ENCODE measurements at regions of chr7 and their contacts with region 1.

Region 1: GRCh38 chr7:38107486-38107893 is 70.6 kb upstream of the STARD3NL start:
- DNase-seq: peak; percentile 39 to 77 (median 50)
- H3K4me3 ChIP-seq: no peak overlapping the region
- H3K4me3 Mint-ChIP-seq: no peak overlapping the region
- H3K27ac ChIP-seq: no peak overlapping the region
- H3K27ac Mint-ChIP-seq: no peak overlapping the region
- H3K4me1 ChIP-seq: no peaks in the 10 kb centered on the region
- H3K4me1 Mint-ChIP-seq: peaks cover 0 to 5% (median 4%) of the 10 kb centered on the region in 3 donors
- H3K27me3 ChIP-seq: peaks cover 4% of the 10 kb centered on the region
- H3K27me3 Mint-ChIP-seq: peaks cover 9 to 37% of the 10 kb centered on the region in 2 donors

Region 2: DNA sequence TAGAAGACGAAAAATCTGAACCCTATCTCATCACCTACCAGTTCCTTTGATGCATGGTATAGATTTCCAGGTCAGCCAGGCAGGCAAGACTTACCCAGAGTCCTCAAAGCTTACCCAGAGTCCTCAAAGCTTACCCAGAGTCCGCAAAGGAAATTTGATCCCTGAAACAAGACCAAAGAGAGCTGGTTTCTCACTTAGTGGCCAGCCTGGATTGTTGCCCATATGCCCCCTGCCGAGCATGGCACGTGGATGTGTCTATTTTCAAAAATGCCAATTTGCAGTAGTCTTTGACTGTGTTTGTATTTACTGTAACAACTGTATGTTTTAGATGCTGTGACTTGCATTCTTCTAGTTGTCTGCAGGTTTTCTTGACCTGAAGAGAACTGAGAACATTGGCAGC is 49.7 kb before region 1 on chr7:
- CTCF ChIA-PET with region 1: no interaction called
- POLR2A ChIA-PET with region 1: no interaction called
- DNase-seq: no peak
- H3K4me3 ChIP-seq: no peak overlapping the region
- H3K4me3 Mint-ChIP-seq: no peak overlapping the region
- H3K27ac ChIP-seq: no peak overlapping the region
- H3K27ac Mint-ChIP-seq: no peak overlapping the region
- H3K4me1 ChIP-seq: no peaks in the 10 kb centered on the region
- H3K4me1 Mint-ChIP-seq: no peaks in the 10 kb centered on the region
- H3K27me3 ChIP-seq: no peaks in the 10 kb centered on the region
- H3K27me3 Mint-ChIP-seq: peaks cover 2 to 14% of the 10 kb centered on the region in 2 donors

Region 3: GRCh38 chr7:38142736-38143135 is 35.2 kb after region 1 on chr7:
- CTCF ChIA-PET with region 1: no interaction called
- POLR2A ChIA-PET with region 1: no interaction called
- DNase-seq: no peak
- H3K4me3 ChIP-seq: no peak overlapping the region
- H3K4me3 Mint-ChIP-seq: no peak overlapping the region
- H3K27ac ChIP-seq: no peak overlapping the region
- H3K27ac Mint-ChIP-seq: no peak overlapping the region
- H3K4me1 ChIP-seq: no peaks in the 10 kb centered on the region
- H3K4me1 Mint-ChIP-seq: no peaks in the 10 kb centered on the region
- H3K27me3 ChIP-seq: peaks cover 3% of the 10 kb centered on the region
- H3K27me3 Mint-ChIP-seq: peaks cover 6% of the 10 kb centered on the region in 2 donors

Region 4: DNA sequence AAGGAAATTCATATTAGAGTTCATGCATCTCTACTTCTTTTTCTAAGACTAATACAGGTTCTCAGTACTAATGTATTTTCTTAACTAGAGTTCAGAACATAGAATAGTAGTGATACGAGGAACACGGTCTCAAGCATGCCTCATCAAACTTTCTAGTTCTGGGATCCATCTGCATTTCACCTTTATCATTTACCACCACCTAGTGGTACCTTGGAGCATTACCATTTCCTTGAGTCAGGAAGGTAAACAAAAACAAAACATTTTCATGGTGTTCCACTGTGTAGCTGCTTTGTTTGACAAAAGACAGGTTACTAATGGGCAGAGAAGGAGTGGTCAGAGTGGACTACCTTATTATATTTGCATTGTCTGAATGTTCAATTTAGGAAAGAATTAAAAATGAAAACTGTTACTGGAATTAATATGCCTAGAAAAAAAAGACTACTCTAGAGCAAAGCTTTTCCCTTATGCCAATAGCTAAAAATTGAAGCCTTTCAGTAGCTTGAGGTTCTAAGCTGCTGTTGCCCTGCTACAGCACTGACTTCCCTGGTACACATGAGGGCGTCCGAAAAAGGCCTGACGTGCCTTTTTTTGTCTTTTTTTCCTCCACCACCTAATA is 115.1 kb after region 1 on chr7:
- CTCF ChIA-PET with region 1: interaction called, 50 read pairs
- POLR2A ChIA-PET with region 1: no interaction called
- DNase-seq: peak in 2 of 5 donors; percentile 58 to 60
- H3K4me3 ChIP-seq: no peak overlapping the region
- H3K4me3 Mint-ChIP-seq: peak overlapping the region in 6 of 7 donors; percentile 3 to 73 (median 21)
- H3K27ac ChIP-seq: no peak overlapping the region
- H3K27ac Mint-ChIP-seq: peak overlapping the region; percentile 54 to 98 (median 92)
- H3K4me1 ChIP-seq: peaks cover 60% of the 10 kb centered on the region
- H3K4me1 Mint-ChIP-seq: peaks cover 88 to 100% (median 99%) of the 10 kb centered on the region in 3 donors
- H3K27me3 ChIP-seq: no peaks in the 10 kb centered on the region
- H3K27me3 Mint-ChIP-seq: no peaks in the 10 kb centered on the region